ENCODE measurements at regions of chr19 and their contacts with region 1.

Region 1: GRCh38 chr19:51367565-51368365 is 1.0 kb downstream of the CLDND2 start:
- DNase-seq: peak; percentile 99 to 100
- H3K4me3 ChIP-seq: peak overlapping the region; percentile 77
- H3K4me3 Mint-ChIP-seq: peak overlapping the region; percentile 94
- H3K27ac Mint-ChIP-seq: peak overlapping the region; percentile 100
- H3K4me1 ChIP-seq: peaks cover 32% of the 10 kb centered on the region
- H3K4me1 Mint-ChIP-seq: peaks cover 20% of the 10 kb centered on the region
- H3K27me3 ChIP-seq: no peaks in the 10 kb centered on the region
- H3K27me3 Mint-ChIP-seq: no peaks in the 10 kb centered on the region
- CTCF ChIP-seq: no peak

Region 2: DNA sequence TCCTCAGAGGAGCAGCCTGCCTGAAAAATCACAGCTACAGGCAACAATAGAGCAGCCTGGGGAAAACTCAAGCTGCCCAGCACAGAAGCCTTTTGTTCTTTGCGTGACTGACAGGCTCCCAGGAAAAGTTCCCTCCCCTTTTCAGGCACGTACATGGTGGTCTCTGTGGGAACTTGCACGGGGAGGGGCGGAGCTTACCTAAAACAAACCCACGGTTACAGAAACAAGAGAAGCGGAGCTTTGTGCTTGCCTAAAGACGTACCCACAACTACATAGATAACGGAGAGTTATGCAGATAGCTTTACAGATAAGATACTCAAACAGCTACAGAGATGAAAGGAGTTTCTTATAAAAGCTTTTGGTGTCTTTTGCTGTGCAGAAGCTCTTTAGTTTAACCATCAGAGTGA is 13.0 kb before region 1 on chr19:
- CTCF ChIA-PET with region 1: interaction called, 11 read pairs
- POLR2A ChIA-PET with region 1: interaction called, 35 read pairs
- intact Hi-C with region 1: loop called (anchors 1 kb)
- DNase-seq: peak; percentile 91 to 96
- H3K4me3 ChIP-seq: no peak overlapping the region
- H3K4me3 Mint-ChIP-seq: peak overlapping the region; percentile 90
- H3K27ac Mint-ChIP-seq: peak overlapping the region; percentile 92
- H3K4me1 ChIP-seq: peaks cover 41% of the 10 kb centered on the region
- H3K4me1 Mint-ChIP-seq: peaks cover 46% of the 10 kb centered on the region
- H3K27me3 ChIP-seq: no peaks in the 10 kb centered on the region
- H3K27me3 Mint-ChIP-seq: no peaks in the 10 kb centered on the region
- CTCF ChIP-seq: no peak

Region 3: DNA sequence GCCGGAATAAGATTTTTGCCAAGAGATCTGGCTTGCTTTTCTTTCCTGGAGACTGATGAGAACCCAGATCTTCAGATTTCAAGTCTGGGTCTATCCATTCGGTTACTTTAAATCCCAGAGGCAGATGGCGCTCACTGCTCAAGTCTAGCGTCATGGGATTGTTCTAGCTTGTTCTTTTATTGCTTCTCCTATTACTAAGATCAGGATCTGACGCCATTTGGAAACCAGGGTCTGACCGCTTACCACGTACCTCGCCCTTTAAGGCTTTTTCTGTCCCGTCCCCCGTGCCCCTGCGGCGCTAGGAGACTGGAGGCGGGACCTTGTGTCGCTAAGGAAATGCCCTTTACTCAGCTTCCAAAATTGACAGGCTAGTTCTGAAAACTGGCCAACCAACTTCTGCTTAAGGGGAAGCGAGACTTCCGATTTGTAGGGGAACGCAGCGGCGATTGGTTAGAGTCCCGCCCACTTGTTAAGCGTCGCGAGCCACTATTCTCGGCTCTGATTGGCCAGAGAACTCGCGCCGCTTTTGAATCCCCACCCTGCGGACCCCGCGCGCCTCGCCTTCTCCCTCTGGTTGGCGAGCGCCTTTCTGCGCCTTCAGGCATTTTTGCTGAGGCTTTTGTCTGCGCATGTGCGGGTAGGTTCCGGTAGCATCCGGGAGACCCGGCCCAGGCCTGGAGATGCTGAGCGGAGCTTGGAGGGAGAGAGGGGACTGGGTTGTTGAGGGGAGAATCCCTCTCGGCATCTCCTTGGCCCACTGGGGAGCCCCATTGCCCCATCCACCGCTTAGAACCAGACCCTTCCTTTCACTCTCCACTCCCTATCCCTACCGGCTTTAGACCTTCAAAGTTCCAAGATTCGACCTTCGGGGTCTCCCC is 26.4 kb after region 1 on chr19:
- CTCF ChIA-PET with region 1: interaction called, 4 read pairs
- POLR2A ChIA-PET with region 1: interaction called, 15 read pairs
- intact Hi-C with region 1: loop called (anchors 1 kb)
- DNase-seq: peak; percentile 97 to 98
- H3K4me3 ChIP-seq: peak overlapping the region; percentile 74
- H3K4me3 Mint-ChIP-seq: peak overlapping the region; percentile 93
- H3K27ac Mint-ChIP-seq: peak overlapping the region; percentile 87
- H3K4me1 ChIP-seq: 0 out of 2 replicates have a peak, but pooled peaks cover 3% of the 10 kb centered on the region
- H3K4me1 Mint-ChIP-seq: peaks cover 6% of the 10 kb centered on the region
- H3K27me3 ChIP-seq: no peaks in the 10 kb centered on the region
- H3K27me3 Mint-ChIP-seq: no peaks in the 10 kb centered on the region
- CTCF ChIP-seq: peak in 1 of 2 experiments; percentile 1

Measured in Caco-2 (cell line).